GM10248 (cell line): ENCODE measurements at regions of chr7 and their contacts with region 1.

Region 1: DNA sequence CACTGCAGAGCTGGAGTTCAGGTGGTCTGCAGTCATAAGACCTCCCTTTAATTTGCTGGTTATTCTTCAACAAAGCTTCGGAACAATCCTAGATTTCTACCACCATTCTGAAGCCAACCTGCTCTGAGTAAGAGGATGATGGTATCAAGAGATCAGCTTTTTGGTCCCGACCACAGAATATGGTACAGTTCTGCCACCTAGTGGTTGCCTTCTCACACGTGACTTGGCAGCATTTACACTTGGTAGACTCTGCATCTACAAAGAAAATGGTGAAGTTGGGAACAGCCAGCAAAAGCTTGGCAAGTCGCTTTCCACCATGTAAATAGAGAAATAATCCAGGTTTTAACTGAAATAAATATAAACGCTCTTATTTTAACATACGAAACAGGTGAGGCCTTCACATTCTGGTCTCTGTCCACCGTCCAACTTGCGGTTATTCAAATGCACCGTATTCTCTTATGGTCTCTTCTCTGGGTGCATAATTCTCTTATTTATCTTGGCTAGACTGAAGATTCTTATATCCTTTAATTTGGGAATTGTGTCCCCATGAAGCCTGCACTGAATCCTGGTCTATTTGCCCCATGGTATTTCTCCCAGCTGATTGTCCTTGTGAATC is 173.9 kb upstream of the GRM3 start:
- DNase-seq: peak; percentile 43
- CTCF ChIP-seq: peak; percentile 65

Region 2: GRCh38 chr7:85890244-85890811 is 579.5 kb before region 1 on chr7:
- CTCF ChIA-PET with region 1: interaction called, 27 read pairs
- POLR2A ChIA-PET with region 1: no interaction called
- DNase-seq: peak; percentile 33
- CTCF ChIP-seq: peak; percentile 43